GM12878 (cell line): ENCODE measurements at regions of chr9 and their contacts with region 1.

Region 1: GRCh38 chr9:34899535-34900158 is 58.4 kb upstream of the PHF24 start:
- DNase-seq: peak; percentile 39
- ATAC-seq: peak; percentile 100
- H3K4me3 ChIP-seq: no peak overlapping the region
- H3K27ac ChIP-seq: no peak overlapping the region
- H3K4me1 ChIP-seq: no peaks in the 10 kb centered on the region
- H3K27me3 ChIP-seq: no peaks in the 10 kb centered on the region; a peak in 1 of 4 replicates
- CTCF ChIP-seq: peak; percentile 78 to 87 (median 84)
- EP300 ChIP-seq: no peak
- POLR2A ChIP-seq: no peak
- RAD21 ChIP-seq: peak; percentile 91

Region 2: DNA sequence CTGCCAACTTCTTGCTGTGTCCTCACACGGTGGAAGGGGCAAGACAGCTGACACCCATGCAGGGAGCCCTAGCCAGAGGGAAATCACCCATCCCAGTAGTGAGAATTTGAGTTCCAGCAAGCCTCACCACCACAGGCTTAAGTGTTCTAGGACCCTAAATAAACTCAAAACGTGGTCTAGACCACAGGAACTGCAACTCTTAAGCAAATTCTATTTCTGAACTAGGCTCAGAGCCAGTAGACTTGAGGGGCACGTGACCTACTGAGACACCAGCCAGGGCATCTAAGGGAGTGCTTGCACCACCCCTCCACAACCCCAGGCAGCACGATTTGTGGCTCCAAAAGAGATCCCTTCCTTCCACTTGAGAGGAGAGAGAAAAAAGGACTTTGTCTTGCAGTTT is 37.6 kb before region 1 on chr9:
- CTCF ChIA-PET with region 1: no interaction called
- POLR2A ChIA-PET with region 1: no interaction called
- RAD21 ChIA-PET with region 1: no interaction called
- SMC1A ChIA-PET with region 1: no interaction called
- in situ Hi-C with region 1: no loop called
- intact Hi-C with region 1: no loop called
- DNase-seq: no peak
- ATAC-seq: no peak
- H3K4me3 ChIP-seq: no peak overlapping the region
- H3K27ac ChIP-seq: no peak overlapping the region
- H3K4me1 ChIP-seq: no peaks in the 10 kb centered on the region
- H3K27me3 ChIP-seq: no peaks in the 10 kb centered on the region
- CTCF ChIP-seq: no peak
- EP300 ChIP-seq: no peak
- POLR2A ChIP-seq: no peak
- RAD21 ChIP-seq: no peak

Region 3: DNA sequence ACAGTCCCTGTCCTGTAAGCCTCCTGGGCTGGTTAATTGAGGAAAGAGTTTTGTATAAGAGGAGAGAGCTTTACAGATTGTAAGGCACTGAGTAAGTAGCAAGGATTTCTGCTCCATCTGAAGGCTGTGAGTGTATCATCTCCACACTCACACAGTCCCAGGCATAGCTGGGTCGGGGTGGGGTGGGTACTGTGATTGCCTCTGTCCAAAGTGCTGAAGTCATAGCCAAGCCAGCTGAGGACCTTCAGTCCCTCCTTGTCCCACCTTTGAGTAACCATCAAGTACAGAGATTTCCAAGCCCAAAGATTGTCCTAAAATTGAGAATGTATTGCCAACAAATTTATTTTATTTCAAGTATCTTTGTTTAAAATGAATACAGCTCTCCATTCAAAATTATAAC is 84.4 kb after region 1 on chr9:
- CTCF ChIA-PET with region 1: interaction called, 86 read pairs
- POLR2A ChIA-PET with region 1: no interaction called
- RAD21 ChIA-PET with region 1: interaction called, 43 read pairs
- SMC1A ChIA-PET with region 1: interaction called, 54 read pairs
- in situ Hi-C with region 1: loop called (anchors 5 kb)
- intact Hi-C with region 1: loop called (anchors 1 kb)
- DNase-seq: no peak
- ATAC-seq: no peak
- H3K4me3 ChIP-seq: no peak overlapping the region
- H3K27ac ChIP-seq: no peak overlapping the region
- H3K4me1 ChIP-seq: peaks cover 38% of the 10 kb centered on the region
- H3K27me3 ChIP-seq: no peaks in the 10 kb centered on the region
- CTCF ChIP-seq: no peak
- EP300 ChIP-seq: no peak
- POLR2A ChIP-seq: no peak
- RAD21 ChIP-seq: no peak

Region 4: DNA sequence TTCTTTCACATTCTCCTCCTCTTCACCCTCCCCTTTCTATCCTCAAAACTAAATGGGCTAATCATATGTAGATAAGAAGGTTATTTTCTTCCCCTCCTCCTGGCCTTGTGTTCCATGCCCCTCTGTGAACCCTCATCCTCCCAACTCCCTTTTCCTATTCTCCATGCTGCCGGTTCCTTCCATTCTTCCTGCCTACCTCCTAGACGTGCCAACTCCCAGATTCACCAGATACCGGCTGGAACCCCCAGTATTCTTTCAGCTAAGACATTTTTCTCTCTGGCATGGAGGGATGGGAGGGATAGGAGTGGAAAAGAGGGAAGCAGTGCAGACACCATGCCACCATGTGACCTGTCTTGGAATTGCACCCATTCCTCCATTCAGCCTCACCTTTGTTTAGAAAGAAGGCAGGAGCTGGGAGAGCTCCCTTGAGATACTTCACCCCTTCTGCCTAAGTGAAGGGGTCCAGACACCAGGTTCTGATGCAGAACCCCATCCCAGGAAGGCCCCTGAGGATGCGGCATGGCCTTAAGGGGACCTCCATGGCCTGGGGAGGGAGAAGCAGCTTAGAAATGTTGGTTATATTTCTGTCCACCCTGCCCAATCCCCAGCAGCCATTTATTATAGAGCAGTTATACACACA is 94.7 kb after region 1 on chr9:
- CTCF ChIA-PET with region 1: interaction called, 63 read pairs
- POLR2A ChIA-PET with region 1: no interaction called
- RAD21 ChIA-PET with region 1: interaction called, 14 read pairs
- SMC1A ChIA-PET with region 1: interaction called, 20 read pairs
- in situ Hi-C with region 1: no loop called
- intact Hi-C with region 1: no loop called
- DNase-seq: no peak
- ATAC-seq: no peak
- H3K4me3 ChIP-seq: no peak overlapping the region
- H3K27ac ChIP-seq: peak overlapping the region; percentile 69; the same call in 1 of the 2 replicates
- H3K4me1 ChIP-seq: peaks cover 33% of the 10 kb centered on the region
- H3K27me3 ChIP-seq: no peaks in the 10 kb centered on the region
- CTCF ChIP-seq: peak; percentile 32 to 56 (median 45)
- EP300 ChIP-seq: no peak
- POLR2A ChIP-seq: no peak
- RAD21 ChIP-seq: no peak

Region 5: DNA sequence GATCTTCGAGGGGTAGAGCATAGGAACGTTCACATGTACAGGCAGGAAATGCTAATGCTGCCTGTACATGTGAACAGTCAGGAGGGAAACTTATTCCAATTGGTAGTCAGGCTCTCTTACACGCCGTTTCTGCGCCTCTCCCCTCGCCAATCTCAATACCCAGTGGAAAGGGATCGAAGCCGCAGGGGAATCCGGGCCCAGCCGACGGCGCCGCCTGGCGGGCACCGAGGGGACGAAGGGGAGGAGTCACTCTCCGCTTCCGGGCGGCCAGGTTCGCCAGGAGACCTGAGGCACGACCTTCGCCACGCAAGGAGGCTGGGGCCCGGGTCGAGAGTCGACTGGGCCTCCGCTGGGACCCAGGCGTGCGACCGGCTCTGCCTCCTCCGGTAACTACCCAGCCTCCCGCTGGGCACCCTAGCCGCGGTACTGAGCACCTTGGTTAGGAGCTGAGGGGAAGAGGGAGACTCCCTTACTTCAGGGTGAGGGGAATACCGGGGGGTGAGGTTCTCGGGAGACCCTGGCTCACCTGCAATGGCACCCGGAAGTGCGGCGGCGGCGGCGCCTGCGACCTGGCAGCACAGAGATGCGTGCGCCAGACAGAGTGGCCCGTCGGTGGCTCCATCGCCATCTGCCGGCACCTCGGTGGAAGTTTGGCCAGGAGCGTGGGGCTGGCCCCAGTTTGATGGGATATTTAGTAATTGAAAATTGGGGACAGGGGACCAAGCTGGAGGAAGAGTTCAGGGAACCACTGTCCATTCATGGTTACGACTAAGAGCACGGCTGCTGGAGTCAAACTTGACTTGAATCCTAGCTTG is 196.6 kb after region 1 on chr9 and contains the start of gene PIGO:
- CTCF ChIA-PET with region 1: interaction called, 12 read pairs
- POLR2A ChIA-PET with region 1: no interaction called
- RAD21 ChIA-PET with region 1: interaction called, 19 read pairs
- SMC1A ChIA-PET with region 1: interaction called, 14 read pairs
- in situ Hi-C with region 1: loop called (anchors 5 kb)
- intact Hi-C with region 1: loop called (anchors 1 kb)
- DNase-seq: no peak
- ATAC-seq: peak; percentile 95
- H3K4me3 ChIP-seq: peak within 1 kb of the TSS; percentile 81
- H3K27ac ChIP-seq: peak within 1 kb of the TSS; percentile 100
- H3K4me1 ChIP-seq: peaks cover 7% of the 10 kb centered on the region
- H3K27me3 ChIP-seq: no peaks in the 10 kb centered on the region
- CTCF ChIP-seq: peak; percentile 87 to 98 (median 96)
- EP300 ChIP-seq: no peak
- POLR2A ChIP-seq: peak; percentile 98
- RAD21 ChIP-seq: peak; percentile 69
- polyA plus RNA-seq, gene PIGO: 8.3 to 13.1 TPM

Region 6: GRCh38 chr9:35258676-35259474 is 359.2 kb after region 1 on chr9:
- CTCF ChIA-PET with region 1: interaction called, 13 read pairs
- POLR2A ChIA-PET with region 1: no interaction called
- RAD21 ChIA-PET with region 1: interaction called, 20 read pairs
- SMC1A ChIA-PET with region 1: interaction called, 7 read pairs
- in situ Hi-C with region 1: no loop called
- intact Hi-C with region 1: loop called (anchors 5 kb)
- DNase-seq: no peak
- ATAC-seq: peak; percentile 71
- H3K4me3 ChIP-seq: no peak overlapping the region
- H3K27ac ChIP-seq: no peak overlapping the region
- H3K4me1 ChIP-seq: no peaks in the 10 kb centered on the region
- H3K27me3 ChIP-seq: no peaks in the 10 kb centered on the region
- CTCF ChIP-seq: peak; percentile 60 to 63 (median 63)
- EP300 ChIP-seq: no peak
- POLR2A ChIP-seq: no peak
- RAD21 ChIP-seq: peak; percentile 67

Region 7: DNA sequence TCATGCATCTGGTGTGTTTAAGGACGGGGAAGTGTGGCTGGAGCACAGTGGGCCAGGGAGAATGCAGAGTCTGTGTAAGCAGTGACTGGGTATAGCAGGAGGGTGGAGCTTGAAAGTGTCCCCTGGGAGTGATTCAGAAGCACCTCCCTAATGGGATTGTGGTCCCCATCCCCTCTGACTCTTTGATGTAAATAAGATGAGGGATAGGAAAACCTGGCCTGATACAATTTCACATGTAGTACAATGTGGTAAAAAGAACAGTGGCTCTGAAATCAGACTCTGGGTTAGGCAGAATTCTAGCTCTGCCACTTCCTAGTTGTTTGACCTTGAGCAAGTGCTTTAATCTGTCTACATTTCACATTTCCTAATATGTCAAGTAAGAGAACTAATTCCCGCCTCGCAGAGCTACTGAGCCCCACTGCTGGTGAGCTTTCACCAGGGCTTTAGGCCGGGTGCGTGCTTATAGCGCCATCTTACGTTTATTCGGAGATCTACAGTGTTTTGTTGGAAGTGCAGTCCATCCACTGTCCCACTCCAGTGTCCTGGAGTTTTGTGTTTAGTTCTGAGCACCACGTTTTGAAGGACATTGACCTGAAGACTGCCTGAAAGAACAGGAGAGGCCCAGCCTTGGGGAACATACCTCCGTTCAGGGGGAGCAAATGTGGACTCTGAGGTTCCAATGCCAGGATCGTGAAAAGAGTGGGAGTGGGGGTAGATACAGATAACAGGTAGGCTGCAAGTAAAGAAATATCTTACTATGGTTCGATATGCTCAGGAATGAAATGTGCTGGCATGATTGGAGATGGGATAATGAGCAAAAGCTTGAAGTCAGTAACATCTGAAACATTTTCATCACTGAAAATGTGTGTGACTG is 654.3 kb after region 1 on chr9:
- CTCF ChIA-PET with region 1: interaction called, 20 read pairs
- POLR2A ChIA-PET with region 1: no interaction called
- RAD21 ChIA-PET with region 1: no interaction called
- SMC1A ChIA-PET with region 1: no interaction called
- in situ Hi-C with region 1: no loop called
- intact Hi-C with region 1: no loop called
- DNase-seq: peak; percentile 8
- ATAC-seq: peak; percentile 82
- H3K4me3 ChIP-seq: no peak overlapping the region
- H3K27ac ChIP-seq: no peak overlapping the region
- H3K4me1 ChIP-seq: no peaks in the 10 kb centered on the region
- H3K27me3 ChIP-seq: no peaks in the 10 kb centered on the region
- CTCF ChIP-seq: peak; percentile 64 to 80 (median 74)
- EP300 ChIP-seq: no peak
- POLR2A ChIP-seq: no peak
- RAD21 ChIP-seq: peak; percentile 83